Dorsolateral prefrontal cortex (tissue), 120 donors: ENCODE measurements at regions of chr3 and their contacts with region 1.

Region 1: GRCh38 chr3:150868282-150868681 is 37.0 kb downstream of the MINDY4B start:
- DNase-seq: no peak
- H3K4me3 ChIP-seq: no peak overlapping the region
- H3K27ac ChIP-seq: no peak overlapping the region
- H3K27me3 ChIP-seq: no peaks in the 10 kb centered on the region
- CTCF ChIP-seq: no peak

Region 2: DNA sequence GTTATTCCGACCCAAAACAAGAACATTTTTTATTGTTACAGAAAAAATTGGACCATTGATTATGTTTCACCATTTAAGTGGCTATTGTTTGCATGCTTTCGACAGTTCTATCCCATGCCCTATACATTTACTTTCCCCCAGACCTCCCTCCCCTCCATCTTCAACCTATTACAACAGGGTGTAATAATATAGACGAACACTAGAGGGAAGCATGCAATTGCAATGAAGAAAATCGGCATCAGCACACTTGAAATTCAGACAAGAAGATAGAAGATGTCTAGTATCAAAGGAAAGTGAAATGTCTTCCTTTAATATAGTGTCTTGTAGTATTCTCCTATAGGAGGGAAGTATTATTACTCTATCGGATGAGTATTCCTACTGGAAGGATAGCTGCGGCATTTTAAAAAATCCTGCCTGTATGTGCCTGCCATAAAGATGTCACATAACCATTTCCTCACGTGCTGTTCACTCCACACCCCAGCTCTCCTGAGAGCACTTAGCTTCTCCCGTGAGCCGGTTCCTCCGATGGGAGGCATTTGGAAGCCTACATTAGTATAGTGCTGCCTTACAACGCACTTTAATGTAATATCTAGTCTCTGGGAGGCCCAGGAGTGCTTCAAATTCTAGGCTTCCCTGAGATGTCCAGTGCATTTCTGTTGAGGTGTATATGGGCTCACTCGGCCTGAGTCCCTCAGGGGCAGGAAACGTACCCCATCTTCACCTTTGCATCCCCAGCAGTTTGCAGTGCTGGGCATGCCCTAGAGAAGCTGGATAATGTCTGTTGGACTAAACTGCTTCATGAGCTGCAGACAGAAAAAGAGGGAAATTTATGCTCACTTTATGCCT is 146.8 kb before region 1 on chr3:
- intact Hi-C with region 1: loop called (anchors 5 kb)
- DNase-seq: peak in 1 of 10 donors; percentile 23
- H3K4me3 ChIP-seq: peak overlapping the region in 45 of 59 donors; percentile 5 to 51 (median 35)
- H3K27ac ChIP-seq: peak overlapping the region in 13 of 59 donors; percentile 2 to 48 (median 35)
- H3K27me3 ChIP-seq: no peaks in the 10 kb centered on the region
- CTCF ChIP-seq: peak; percentile 73 to 97 (median 88)

Region 3: DNA sequence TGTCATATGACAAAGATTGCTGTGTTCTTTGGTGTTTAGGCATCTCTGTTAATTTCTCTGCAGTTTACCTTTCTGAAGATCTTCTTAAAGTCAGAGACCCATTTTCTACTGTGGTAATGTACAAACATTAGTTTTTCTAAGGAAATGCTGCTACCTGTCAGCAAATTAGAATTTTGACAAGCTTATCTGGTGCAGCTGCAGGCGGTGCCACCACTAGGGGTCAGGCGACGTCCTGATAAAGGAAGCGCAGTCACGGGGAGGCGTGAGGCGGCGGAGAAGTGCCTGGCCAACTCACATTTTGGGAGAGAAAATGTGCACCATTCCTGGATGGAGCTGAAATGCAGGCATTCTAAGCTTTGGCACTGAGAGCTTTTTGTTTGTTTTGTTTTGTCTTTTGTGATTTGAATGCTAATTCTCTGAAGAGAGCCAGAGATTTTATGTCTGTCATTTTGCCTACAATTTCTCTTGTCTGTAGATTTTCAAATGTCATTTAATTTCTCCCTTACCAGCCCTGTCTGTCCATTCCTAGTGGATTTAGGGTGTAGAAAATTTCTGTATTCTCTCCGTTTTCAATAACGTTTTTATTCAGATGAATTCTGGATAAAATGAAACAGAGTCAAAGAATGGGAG is 80.4 kb before region 1 on chr3:
- intact Hi-C with region 1: loop called in 1 of 2 experiments (anchors 5 kb)
- DNase-seq: peak; percentile 78 to 91 (median 86)
- H3K4me3 ChIP-seq: peak overlapping the region in 10 of 59 donors; percentile 4 to 28 (median 16)
- H3K27ac ChIP-seq: peak overlapping the region in 2 of 59 donors; percentile 17 to 20
- H3K27me3 ChIP-seq: no peaks in the 10 kb centered on the region
- CTCF ChIP-seq: peak; percentile 80 to 99 (median 94)

Region 4: DNA sequence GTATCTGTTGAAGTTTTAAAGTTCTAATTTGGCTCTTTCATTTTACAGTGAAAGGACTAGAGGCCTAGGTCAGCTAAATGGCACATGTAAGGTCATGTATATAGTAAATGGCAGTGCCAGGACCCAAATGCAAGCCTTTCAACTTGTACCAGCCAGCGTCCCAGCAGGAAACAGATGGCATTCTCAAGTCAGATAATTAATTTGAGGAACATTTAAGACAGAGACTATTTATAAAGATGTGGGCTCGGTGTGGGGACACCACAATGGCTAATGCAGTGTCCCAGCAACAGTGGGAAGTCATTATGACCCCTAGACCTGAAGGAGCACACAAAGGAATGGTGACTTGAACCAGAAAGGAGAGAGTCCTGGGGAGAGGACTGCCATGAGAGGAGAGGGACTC is 30.9 kb after region 1 on chr3:
- intact Hi-C with region 1: no loop called
- DNase-seq: no peak
- H3K4me3 ChIP-seq: no peak overlapping the region
- H3K27ac ChIP-seq: peak overlapping the region in 7 of 59 donors; percentile 5 to 57 (median 29)
- H3K27me3 ChIP-seq: peaks cover 0 to 4% (median 0%) of the 10 kb centered on the region in 45 donors
- CTCF ChIP-seq: no peak